ENCODE measurements at regions of chr1 and their contacts with region 1.

Region 1: GRCh38 chr1:202926720-202927491 is at the start of gene KLHL12:
- DNase-seq: peak; percentile 97
- H3K4me3 ChIP-seq: peak within 1 kb of the TSS; percentile 57 to 94 (median 89)
- H3K27ac ChIP-seq: peak within 1 kb of the TSS; percentile 90
- H3K4me1 ChIP-seq: peaks cover 8% of the 10 kb centered on the region
- H3K27me3 ChIP-seq: no peaks in the 10 kb centered on the region
- CTCF ChIP-seq: peak; percentile 54 to 91
- total RNA-seq, gene KLHL12: 20.8 to 28.3 TPM

Region 2: DNA sequence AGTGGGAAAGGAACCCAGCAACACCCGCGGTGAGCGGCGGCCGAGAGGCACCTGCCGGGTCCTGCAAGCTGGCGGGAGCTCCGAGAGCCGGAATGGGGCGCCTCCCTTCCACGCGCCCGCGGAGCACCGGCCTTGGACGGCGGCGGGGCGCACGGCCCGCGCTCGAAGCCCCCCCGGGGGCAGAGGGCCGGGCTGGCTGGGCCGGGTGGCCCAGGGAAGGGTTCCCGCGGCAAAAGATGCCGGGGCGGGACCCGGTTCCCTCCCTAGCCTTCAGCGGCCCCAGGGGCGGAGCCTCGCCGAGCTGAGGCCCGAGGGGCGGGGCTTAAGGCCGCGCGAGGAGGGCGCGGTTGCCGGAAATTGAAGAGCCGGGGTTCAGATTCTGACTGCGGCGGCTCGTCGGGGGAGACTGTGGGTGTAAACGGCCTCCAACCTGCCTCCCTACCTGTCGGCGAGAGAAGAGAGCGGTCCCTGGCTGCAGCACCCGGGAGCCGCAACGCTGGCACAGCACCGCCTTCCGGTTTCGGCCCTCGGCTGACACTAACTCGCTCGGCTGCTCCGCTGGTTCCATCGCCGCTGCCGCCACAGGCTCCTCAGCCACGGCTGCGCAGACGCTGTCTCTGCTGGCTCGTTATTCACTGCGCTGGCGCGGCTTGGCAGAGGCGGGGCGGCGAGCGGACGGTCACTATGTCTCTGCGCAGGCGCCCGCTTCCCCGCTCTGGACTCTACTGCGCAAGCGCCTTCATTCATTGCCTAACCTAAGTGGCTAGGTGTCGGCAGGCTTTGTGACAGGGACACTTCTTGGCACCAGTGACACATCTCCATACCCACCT is 38.2 kb before region 1 on chr1 and contains the start of gene RABIF:
- CTCF ChIA-PET with region 1: no interaction called
- dilution Hi-C with region 1: no loop called
- in situ Hi-C with region 1: no loop called
- intact Hi-C with region 1: loop called (anchors 1 kb)
- DNase-seq: peak; percentile 92
- H3K4me3 ChIP-seq: peak within 1 kb of the TSS; percentile 87 to 93 (median 88)
- H3K27ac ChIP-seq: peak within 1 kb of the TSS; percentile 64
- H3K4me1 ChIP-seq: peaks cover 12% of the 10 kb centered on the region
- H3K27me3 ChIP-seq: no peaks in the 10 kb centered on the region
- CTCF ChIP-seq: peak in 1 of 2 donors; percentile 37
- total RNA-seq, gene RABIF: 5.2 to 8.5 TPM

Region 3: DNA sequence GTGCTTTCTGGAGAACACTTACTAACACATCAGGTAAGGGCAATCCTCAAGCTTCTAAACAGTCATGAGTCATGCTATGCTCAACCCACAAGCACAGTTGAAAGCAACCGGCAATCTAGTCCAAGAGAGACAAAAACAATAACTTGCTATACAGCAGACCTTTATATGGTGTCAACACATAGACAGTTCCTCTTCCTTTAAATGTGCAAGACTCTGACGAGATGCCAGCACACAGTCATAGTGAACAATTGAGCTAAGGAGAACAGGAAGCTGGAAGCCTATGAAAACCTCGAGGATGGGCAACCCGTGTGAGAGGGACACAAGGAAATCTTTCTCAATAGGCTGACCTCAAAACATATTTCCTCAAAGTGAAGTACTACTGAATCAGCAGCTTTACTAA is 25.9 kb after region 1 on chr1:
- CTCF ChIA-PET with region 1: interaction called, 17 read pairs
- dilution Hi-C with region 1: no loop called
- in situ Hi-C with region 1: no loop called
- intact Hi-C with region 1: loop called (anchors 1 kb)
- DNase-seq: peak; percentile 93
- H3K4me3 ChIP-seq: peak overlapping the region in 1 of 3 experiments; percentile 5
- H3K27ac ChIP-seq: peak overlapping the region; percentile 61
- H3K4me1 ChIP-seq: peaks cover 48% of the 10 kb centered on the region
- H3K27me3 ChIP-seq: no peaks in the 10 kb centered on the region
- CTCF ChIP-seq: no peak

Region 4: GRCh38 chr1:202957733-202958543 is 31.0 kb after region 1 on chr1 and contains the start of gene ADIPOR1:
- CTCF ChIA-PET with region 1: interaction called, 17 read pairs
- dilution Hi-C with region 1: no loop called
- in situ Hi-C with region 1: no loop called
- intact Hi-C with region 1: loop called (anchors 1 kb)
- DNase-seq: peak; percentile 90
- H3K4me3 ChIP-seq: peak within 1 kb of the TSS; percentile 72 to 95 (median 88)
- H3K27ac ChIP-seq: peak within 1 kb of the TSS; percentile 85
- H3K4me1 ChIP-seq: peaks cover 51% of the 10 kb centered on the region
- H3K27me3 ChIP-seq: no peaks in the 10 kb centered on the region
- CTCF ChIP-seq: no peak
- total RNA-seq, gene ADIPOR1: 98.2 to 157 TPM

Region 5: DNA sequence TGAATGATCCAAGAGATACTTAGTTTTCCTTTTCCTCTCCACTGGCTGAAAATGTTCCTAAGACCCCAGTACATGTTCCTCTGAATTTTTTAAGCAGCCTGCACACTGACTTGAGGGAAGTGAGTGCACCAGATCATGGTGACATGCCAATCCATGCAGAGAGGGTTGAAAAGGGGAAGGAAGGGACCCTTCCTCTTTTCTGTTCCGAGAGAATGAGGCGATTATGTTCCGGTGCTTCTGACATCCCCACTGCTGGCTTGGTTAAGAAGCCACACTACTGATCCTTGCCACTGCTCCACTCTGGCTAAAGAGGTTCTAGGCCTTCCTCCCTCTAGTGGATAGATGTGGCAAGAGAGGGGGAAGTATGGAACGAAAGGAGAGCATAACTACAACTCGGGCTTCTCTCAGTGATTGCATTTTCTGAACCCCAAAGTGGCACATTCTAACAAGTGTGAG is 42.0 kb after region 1 on chr1:
- CTCF ChIA-PET with region 1: no interaction called
- dilution Hi-C with region 1: no loop called
- in situ Hi-C with region 1: no loop called
- intact Hi-C with region 1: loop called (anchors 1 kb)
- DNase-seq: peak; percentile 48
- H3K4me3 ChIP-seq: no peak overlapping the region
- H3K27ac ChIP-seq: no peak overlapping the region
- H3K4me1 ChIP-seq: peaks cover 31% of the 10 kb centered on the region
- H3K27me3 ChIP-seq: no peaks in the 10 kb centered on the region
- CTCF ChIP-seq: peak; percentile 83 to 90

Region 6: DNA sequence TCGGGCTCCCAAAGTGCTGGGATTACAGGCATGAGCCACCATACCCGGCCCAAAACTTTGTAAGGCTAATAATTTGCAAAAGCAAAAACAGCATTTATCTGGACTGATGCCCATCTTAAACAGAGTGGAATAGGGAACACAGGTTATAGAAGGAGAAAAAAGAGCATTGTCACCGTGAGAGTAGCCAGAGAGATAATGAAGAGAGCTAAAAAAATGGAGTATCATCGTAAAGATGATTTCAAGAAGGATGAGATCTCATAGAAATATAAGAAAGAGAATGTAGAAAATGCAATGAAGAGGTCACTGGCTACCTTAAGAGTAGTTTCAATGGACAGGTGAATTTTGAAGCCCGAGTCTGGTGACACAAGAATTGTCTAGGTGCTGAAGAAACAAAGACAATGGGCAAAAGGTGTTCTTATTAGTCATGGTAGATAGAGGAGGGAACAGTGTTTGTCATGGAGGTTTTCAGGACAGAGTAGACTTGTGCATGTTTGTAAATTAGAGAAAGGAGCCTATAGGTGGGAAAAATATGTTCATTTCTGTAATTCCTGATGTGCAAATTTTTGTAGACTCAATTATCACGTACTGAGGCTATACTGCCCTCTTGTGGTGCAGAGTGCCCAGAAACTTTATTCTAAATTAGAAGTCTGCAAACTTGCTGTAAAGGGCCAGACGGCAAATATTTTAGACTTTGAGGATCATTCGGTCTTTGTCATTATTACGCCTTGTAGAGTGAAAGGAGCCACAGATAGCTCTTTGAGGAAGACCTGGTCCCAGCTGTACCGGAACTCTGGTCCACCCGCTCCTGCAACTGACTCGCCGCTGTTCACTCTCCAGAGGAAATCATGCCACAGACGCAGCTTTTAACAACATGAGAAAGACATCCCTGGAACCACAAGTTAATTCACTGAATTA is 72.2 kb after region 1 on chr1:
- CTCF ChIA-PET with region 1: no interaction called
- dilution Hi-C with region 1: loop called (anchors 25 kb)
- in situ Hi-C with region 1: no loop called
- intact Hi-C with region 1: loop called (anchors 1 kb)
- DNase-seq: peak; percentile 28
- H3K4me3 ChIP-seq: no peak overlapping the region
- H3K27ac ChIP-seq: no peak overlapping the region
- H3K4me1 ChIP-seq: no peaks in the 10 kb centered on the region
- H3K27me3 ChIP-seq: no peaks in the 10 kb centered on the region
- CTCF ChIP-seq: peak; percentile 80 to 86

Region 7: DNA sequence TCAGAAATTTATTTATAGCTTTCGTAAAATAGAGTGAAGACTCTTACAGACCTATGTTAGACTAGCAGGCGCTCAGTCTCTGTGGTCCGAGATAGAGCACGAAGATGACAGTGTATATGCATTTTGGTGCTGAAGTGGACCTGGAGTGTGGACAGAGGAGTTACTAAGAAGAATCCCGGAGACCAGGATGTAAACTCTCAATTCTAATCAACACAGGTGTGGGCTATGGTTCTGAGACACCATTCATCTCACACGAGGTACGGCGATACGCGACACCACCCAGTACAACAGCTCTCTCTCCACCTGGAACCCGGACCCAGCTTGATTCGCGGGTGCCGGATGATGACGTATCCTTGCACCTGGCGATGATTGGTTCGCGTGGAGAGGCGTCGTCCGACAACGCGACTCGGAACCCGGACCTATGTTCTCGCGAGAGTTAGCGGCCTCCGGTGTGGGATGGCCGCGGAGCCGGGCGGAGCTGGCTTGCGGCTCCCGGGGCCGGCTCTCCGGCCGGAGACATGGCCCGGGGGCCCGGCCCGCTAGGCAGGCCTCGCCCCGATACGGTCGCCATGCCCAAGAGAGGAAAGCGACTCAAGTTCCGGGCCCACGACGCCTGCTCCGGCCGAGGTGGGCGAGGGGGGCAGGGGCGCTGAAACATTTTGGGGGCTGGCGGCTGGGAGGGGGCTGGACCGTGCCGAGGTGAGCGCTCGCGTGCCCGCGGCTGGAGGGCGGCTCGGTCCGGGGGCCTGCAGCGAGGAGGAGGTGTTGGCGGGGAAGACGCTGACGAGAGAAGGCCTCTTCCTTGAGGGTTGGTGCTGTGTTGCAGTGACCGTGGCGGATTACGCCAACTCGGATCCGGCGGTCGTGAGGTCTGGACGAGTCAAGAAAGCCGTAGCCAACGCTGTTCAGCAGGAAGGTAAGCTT is 80.3 kb after region 1 on chr1 and contains the start of gene TMEM183A:
- CTCF ChIA-PET with region 1: no interaction called
- dilution Hi-C with region 1: loop called (anchors 25 kb)
- in situ Hi-C with region 1: no loop called
- intact Hi-C with region 1: no loop called
- DNase-seq: peak; percentile 95
- H3K4me3 ChIP-seq: peak within 1 kb of the TSS; percentile 72 to 96 (median 87)
- H3K27ac ChIP-seq: peak within 1 kb of the TSS; percentile 84
- H3K4me1 ChIP-seq: peaks cover 10% of the 10 kb centered on the region
- H3K27me3 ChIP-seq: no peaks in the 10 kb centered on the region
- CTCF ChIP-seq: no peak
- total RNA-seq, gene TMEM183A: 58.1 to 97.4 TPM

Measured in mammary epithelial cell (primary cell).